HEK293T (cell line): ENCODE measurements at regions of chr17 and their contacts with region 1.

Region 1: DNA sequence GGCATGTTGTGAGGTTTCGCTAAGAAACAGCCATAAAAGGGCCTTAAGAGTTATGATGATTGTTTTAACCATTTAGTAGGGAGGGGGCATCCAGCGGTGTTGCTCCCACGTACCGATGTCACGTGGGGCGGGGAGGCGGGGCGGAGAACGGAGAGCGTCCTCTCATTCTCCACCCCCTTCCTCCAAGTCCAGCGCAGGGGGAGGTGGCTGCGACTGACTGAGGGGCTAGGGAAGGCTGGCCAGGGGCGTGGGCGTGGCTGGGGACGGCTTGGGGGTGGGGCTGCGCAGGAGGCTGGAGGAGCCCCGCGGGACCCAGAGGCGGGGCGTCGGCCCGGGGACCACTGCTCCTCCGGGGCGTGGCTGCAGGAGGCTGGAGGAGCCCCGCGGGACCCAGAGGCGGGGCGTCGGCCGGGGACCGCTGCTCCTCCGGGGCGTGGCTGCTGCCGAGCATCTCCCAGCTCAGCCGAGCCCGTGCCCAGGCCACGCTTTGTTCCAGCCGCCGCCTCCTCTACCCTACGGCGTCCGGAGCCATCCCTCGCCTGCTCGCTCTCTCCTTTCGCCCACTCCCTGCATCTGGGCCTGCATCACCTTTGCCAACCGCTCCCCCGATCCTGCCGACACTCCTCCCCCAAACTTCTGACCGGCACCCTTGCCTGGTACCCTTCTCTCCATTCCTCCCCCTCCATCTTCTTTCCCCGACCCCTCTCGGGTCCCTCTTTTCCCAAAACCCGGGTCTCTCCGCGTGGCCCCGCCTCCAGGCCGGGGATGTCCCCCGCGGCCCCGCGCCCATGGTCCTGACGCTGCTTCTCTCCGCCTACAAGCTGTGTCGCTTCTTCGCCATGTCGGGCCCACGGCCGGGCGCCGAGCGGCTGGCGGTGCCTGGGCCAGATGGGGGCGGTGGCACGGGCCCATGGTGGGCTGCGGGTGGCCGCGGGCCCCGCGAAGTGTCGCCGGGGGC is at the start of gene SARM1:
- DNase-seq: peak; percentile 83

Region 2: DNA sequence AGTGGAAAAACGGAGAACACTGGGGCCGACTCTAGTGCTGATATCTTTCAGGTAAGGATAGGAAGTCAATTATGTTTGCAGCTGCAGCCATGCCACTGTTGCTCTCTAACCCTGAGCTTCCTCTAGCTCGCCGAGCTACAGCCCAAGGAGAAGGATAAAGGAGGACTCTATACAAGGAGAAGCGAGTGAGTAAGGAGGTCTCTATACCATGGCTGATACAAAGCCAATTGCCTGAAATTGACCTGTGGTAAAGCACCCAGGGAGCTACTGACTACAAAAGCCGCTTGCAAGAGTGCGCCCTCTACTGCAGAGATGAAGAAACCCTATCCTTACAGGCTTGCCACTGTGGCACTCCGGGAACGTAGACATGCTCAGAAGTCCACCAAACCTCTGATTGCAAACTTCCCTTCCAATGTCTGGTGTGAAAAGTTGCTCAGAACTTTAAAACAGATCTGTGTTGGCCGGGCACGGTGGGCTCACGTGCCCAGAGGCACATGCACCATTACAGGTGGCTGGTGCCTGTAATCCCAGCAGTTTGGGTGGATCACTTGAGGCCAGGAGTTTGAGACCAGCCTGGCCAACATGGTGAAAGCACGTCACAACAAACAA is 45.3 kb after region 1 on chr17:
- CTCF ChIA-PET with region 1: interaction called, 14 read pairs
- POLR2A ChIA-PET with region 1: no interaction called
- DNase-seq: peak; percentile 65

Region 3: GRCh38 chr17:28446728-28447395 is 75.3 kb after region 1 on chr17:
- CTCF ChIA-PET with region 1: no interaction called
- POLR2A ChIA-PET with region 1: no interaction called
- DNase-seq: no peak